Prostate gland (tissue), 2 donors: ENCODE measurements at regions of chr12 and their contacts with region 1.

Region 1: GRCh38 chr12:75505706-75506312 is 5.6 kb downstream of the KRR1 start:
- DNase-seq: no peak
- H3K4me3 ChIP-seq: no peak overlapping the region
- H3K27ac ChIP-seq: no peak overlapping the region
- H3K4me1 ChIP-seq: peaks cover 8% of the 10 kb centered on the region
- H3K27me3 ChIP-seq: no peaks in the 10 kb centered on the region
- CTCF ChIP-seq: peak; percentile 36 to 60 (median 48)
- POLR2A ChIP-seq: no peak

Region 2: DNA sequence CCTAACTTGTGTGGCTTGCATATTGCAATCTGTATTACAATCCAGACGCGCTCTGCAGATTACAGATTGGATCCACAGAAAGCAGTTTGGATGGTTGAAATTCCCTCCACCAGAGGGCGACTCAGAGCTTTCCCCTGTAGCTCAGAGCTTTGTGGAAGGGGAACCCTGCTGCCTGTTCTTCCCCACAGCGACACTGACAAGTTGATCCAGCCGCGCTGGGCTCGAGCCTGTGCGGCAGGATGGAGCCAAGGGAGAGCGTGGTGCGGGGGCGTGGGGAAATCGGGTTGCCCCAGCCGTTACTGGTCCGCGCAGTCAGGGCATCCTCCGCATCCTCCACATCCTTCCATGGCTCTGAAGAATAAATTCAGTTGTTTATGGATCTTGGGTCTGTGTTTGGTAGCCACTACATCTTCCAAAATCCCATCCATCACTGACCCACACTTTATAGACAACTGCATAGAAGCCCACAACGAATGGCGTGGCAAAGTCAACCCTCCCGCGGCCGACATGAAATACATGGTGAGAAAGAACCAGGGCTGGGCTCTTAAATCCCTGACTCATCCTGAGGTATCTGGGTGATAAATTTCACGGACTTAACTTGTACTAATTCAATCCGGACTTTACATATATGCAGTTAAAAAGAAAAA is 171.3 kb before region 1 on chr12 and contains the start of gene GLIPR1L1:
- intact Hi-C with region 1: loop called (anchors 10 kb)
- DNase-seq: peak; percentile 81
- H3K4me3 ChIP-seq: peak within 1 kb of the TSS; percentile 12 to 15
- H3K27ac ChIP-seq: no peak within 1 kb of the TSS
- H3K4me1 ChIP-seq: no peaks in the 10 kb centered on the region
- H3K27me3 ChIP-seq: no peaks in the 10 kb centered on the region
- CTCF ChIP-seq: peak; percentile 66 to 85 (median 76)
- POLR2A ChIP-seq: no peak
- total RNA-seq, gene GLIPR1L1: 1.0 TPM in 1 of 2 donors, not detected in the other

Region 3: DNA sequence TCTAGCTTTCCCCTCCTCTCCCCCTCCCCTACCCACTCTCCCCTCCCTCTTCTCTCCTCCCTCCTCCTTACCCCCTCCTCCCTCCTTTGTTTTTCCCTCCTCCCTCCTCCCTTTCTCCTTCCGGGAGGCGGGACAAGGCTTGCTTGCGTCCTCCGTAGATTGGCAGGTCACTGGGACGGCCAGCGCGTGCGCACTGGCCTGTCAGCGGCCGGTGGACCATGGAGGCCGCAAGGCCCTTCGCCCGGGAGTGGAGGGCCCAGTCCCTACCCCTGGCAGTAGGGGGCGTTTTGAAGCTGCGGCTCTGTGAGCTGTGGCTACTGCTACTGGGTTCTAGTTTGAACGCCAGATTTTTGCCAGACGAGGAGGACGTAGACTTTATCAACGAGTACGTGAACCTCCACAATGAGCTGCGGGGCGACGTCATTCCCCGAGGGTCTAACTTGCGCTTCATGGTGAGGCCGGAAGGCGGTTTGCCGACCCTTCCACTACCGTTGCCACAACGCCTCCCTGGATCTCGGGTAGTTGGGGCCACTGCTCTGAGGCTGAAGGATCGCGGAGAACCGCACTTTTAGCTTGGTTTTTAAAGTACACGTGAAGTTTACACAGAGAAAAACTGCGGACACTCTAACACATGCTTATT is 114.8 kb before region 1 on chr12 and contains the start of gene GLIPR1L2:
- intact Hi-C with region 1: loop called (anchors 5 kb)
- DNase-seq: peak; percentile 94
- H3K4me3 ChIP-seq: peak within 1 kb of the TSS; percentile 46 to 52
- H3K27ac ChIP-seq: peak within 1 kb of the TSS; percentile 86 to 91
- H3K4me1 ChIP-seq: no peaks in the 10 kb centered on the region
- H3K27me3 ChIP-seq: no peaks in the 10 kb centered on the region
- CTCF ChIP-seq: peak; percentile 21 to 91 (median 82)
- POLR2A ChIP-seq: peak; percentile 64
- total RNA-seq, gene GLIPR1L2: 1.4 to 1.8 TPM